Body of pancreas (tissue), 4 donors: ENCODE measurements at regions of chr21 and their contacts with region 1.

Region 1: GRCh38 chr21:29298348-29299045 is at the start of gene BACH1:
- DNase-seq: peak; percentile 92 to 94 (median 93)
- ATAC-seq: peak; percentile 91
- H3K4me3 ChIP-seq: peak within 1 kb of the TSS; percentile 33 to 87
- H3K27ac ChIP-seq: peak within 1 kb of the TSS; percentile 92 to 98 (median 96)
- H3K4me1 ChIP-seq: peaks cover 38% of the 10 kb centered on the region
- H3K27me3 ChIP-seq: no peaks in the 10 kb centered on the region
- CTCF ChIP-seq: peak; percentile 23 to 68 (median 44)
- POLR2A ChIP-seq: peak; percentile 91 to 94 (median 93)
- total RNA-seq, gene BACH1: 28.5 to 29.7 TPM

Region 2: DNA sequence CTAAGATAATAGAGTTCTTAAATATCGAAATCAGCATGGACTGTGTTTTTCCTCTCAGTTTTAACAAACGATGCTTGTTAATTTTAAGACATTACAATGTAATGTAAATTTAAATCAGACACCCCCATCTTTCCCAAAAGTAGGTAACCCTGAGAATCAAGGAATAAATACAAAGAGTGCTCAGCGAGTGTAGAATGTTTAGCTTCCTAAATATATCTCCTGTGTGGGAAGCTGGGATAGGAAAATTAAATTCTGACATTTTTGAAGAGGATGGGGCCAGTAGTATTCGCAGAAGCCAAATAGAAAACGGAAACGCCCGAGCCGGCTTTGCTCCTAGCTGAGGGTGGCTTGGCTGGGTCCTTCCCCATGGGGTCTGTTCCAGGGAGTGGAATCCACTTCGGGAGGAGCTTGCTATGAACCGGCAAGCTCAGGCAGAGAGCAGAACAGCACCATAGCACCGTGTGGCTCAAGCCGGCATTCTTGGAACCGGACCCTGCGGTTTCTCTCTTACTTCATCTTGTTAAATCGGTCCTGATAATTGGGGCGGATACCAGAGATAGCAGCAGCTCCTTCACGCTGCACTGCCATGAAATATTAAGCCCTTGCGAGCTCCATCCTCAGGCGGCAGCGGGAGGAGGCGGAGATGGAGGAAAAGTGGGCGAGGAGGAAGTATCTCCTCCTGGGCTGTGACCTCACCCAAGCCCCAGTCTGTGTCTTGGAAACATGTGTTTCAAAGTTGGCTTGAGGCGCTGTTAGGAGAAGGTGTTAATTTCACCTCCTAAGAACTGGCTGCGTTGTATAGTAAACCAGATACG is 143.2 kb before region 1 on chr21:
- intact Hi-C with region 1: loop called (anchors 10 kb)
- DNase-seq: peak in 3 of 4 donors; percentile 23 to 27 (median 24)
- ATAC-seq: peak; percentile 45
- H3K4me3 ChIP-seq: no peak overlapping the region
- H3K27ac ChIP-seq: no peak overlapping the region
- H3K4me1 ChIP-seq: no peaks in the 10 kb centered on the region
- H3K27me3 ChIP-seq: no peaks in the 10 kb centered on the region
- CTCF ChIP-seq: no peak
- POLR2A ChIP-seq: no peak